ENCODE measurements at regions of chr11 and their contacts with region 1.

Region 1: DNA sequence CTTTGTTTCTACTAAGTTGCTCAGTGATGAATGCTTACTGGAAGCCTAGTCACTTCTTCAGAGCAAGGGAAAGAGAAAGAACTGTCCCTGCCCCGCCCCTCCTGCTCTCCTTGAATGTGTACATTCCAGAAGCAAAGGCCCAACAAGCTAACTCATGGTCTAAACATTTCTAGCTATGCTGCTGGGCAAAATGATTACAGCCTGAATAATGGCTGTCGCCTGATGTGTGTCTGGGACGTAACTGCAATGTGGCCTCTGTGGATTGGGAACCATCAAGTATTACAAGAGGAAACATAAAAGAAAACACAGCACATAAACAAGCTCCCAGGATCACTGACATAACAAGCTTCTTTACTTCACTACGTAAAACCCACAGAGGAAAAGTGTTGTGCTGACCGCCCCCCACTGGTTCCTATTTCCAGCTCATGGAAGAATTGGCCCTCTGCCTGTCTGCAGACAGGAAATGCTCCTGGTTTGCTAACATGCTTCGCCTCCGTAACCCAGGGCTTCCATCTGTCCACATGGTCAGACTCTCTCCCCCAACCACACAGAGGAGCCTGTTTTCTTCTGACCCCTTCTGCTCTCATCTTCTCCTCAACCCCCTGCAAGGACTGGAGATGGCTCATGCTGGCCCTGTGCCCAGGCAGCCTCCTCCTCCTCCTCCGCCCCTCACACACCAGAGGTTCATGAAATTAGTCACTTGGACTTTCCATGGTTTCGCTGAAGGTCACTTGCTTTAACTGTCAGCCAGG is 187.2 kb downstream of the MAML2 start:
- DNase-seq: peak; percentile 93
- H3K4me3 ChIP-seq: no peak overlapping the region
- H3K27ac ChIP-seq: peak overlapping the region; percentile 92
- H3K4me1 ChIP-seq: peaks cover 41% of the 10 kb centered on the region
- H3K27me3 ChIP-seq: no peaks in the 10 kb centered on the region
- CTCF ChIP-seq: peak in 1 of 2 donors; percentile 34

Region 2: GRCh38 chr11:96098514-96099241 is 57.1 kb before region 1 on chr11:
- CTCF ChIA-PET with region 1: no interaction called
- dilution Hi-C with region 1: no loop called
- in situ Hi-C with region 1: loop called in 1 of 2 experiments (anchors 5 kb)
- intact Hi-C with region 1: no loop called
- DNase-seq: peak; percentile 89
- H3K4me3 ChIP-seq: no peak overlapping the region
- H3K27ac ChIP-seq: peak overlapping the region; percentile 90
- H3K4me1 ChIP-seq: peaks cover 61% of the 10 kb centered on the region
- H3K27me3 ChIP-seq: no peaks in the 10 kb centered on the region
- CTCF ChIP-seq: no peak

Region 3: GRCh38 chr11:96122601-96123074 is 33.2 kb before region 1 on chr11:
- CTCF ChIA-PET with region 1: no interaction called
- dilution Hi-C with region 1: no loop called
- in situ Hi-C with region 1: no loop called
- intact Hi-C with region 1: loop called (anchors 2 kb)
- DNase-seq: peak; percentile 98
- H3K4me3 ChIP-seq: no peak overlapping the region
- H3K27ac ChIP-seq: peak overlapping the region; percentile 67
- H3K4me1 ChIP-seq: peaks cover 19% of the 10 kb centered on the region
- H3K27me3 ChIP-seq: no peaks in the 10 kb centered on the region
- CTCF ChIP-seq: peak; percentile 29 to 32

Region 4: DNA sequence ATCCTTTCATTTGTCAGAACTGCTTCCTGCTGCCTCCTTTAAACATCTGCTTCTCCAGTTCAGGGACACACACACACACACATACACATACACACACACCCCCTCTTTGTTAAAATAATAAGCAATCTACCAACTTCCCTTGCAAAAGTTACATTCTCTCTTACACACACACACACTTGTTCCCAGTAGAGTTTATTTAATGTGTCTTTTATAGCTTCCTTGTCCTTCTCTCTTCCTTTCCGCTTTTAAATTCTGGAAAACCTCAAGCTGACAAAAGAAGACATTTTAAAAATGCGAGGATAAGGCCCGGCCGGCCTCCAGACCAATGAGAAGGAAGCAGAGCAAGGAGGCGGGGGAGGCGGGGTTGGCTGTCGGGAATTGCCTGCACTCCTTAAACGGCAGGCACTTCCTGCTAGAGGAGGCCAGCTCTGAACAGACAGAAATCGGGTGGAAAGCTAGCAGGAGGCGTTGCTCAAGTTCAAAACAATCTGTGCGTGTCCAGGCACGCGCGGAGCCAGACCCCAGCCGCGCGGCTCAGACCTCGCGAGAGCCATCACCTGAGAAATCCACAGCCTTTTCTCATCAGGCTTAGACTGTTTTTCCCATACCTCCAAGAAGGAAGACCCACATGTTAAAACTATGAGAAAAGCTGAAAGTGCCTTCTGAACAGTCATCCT is 87.3 kb after region 1 on chr11:
- CTCF ChIA-PET with region 1: no interaction called
- dilution Hi-C with region 1: no loop called
- in situ Hi-C with region 1: no loop called
- intact Hi-C with region 1: loop called (anchors 2 kb)
- DNase-seq: peak; percentile 92
- H3K4me3 ChIP-seq: peak overlapping the region; percentile 25 to 31 (median 30)
- H3K27ac ChIP-seq: peak overlapping the region; percentile 74
- H3K4me1 ChIP-seq: peaks cover 40% of the 10 kb centered on the region
- H3K27me3 ChIP-seq: no peaks in the 10 kb centered on the region
- CTCF ChIP-seq: no peak

Measured in mammary epithelial cell (primary cell).